Posterior vena cava (tissue), 2 donors: ENCODE measurements at regions of chr4 and their contacts with region 1.

Region 1: GRCh38 chr4:33566649-33567048 is 2677.7 kb downstream of the ARAP2 start:
- DNase-seq: no peak

Region 2: DNA sequence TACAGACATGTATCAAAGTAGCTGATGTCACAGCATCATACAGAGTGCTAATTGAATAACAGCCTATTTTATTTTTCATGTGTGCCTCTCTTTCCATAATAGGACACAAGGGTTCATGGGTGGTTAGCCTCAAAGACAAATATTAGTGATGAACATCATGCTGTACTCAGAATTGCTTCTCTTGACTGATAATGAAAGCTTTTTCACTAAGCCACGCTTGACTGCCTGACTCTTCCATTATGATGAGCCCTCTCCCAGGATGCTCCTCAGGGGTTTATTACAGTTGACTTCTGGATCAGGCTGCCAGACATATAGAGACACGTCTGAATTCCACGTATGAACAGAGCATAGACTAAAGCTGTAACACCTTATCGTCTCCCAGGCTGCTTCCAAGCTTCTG is 88.9 kb before region 1 on chr4:
- intact Hi-C with region 1: no loop called
- DNase-seq: no peak

Region 3: GRCh38 chr4:33616121-33616520 is 49.5 kb after region 1 on chr4:
- intact Hi-C with region 1: loop called in 1 of 2 experiments (anchors 2 kb)
- DNase-seq: no peak